ENCODE measurements at regions of chr20 and their contacts with region 1.

Region 1: GRCh38 chr20:32652739-32653526 is 20.8 kb downstream of the C20orf203 start:
- DNase-seq: peak; percentile 14
- H3K4me3 ChIP-seq: no peak overlapping the region
- CTCF ChIP-seq: peak; percentile 95

Region 2: GRCh38 chr20:32497589-32498224 is 155.2 kb before region 1 on chr20:
- CTCF ChIA-PET with region 1: interaction called, 10 read pairs
- POLR2A ChIA-PET with region 1: no interaction called
- DNase-seq: no peak
- H3K4me3 ChIP-seq: no peak overlapping the region
- CTCF ChIP-seq: no peak

Region 3: GRCh38 chr20:32610472-32611218 is 42.3 kb before region 1 on chr20:
- CTCF ChIA-PET with region 1: interaction called, 10 read pairs
- POLR2A ChIA-PET with region 1: no interaction called
- DNase-seq: no peak
- H3K4me3 ChIP-seq: no peak overlapping the region
- CTCF ChIP-seq: no peak

Region 4: DNA sequence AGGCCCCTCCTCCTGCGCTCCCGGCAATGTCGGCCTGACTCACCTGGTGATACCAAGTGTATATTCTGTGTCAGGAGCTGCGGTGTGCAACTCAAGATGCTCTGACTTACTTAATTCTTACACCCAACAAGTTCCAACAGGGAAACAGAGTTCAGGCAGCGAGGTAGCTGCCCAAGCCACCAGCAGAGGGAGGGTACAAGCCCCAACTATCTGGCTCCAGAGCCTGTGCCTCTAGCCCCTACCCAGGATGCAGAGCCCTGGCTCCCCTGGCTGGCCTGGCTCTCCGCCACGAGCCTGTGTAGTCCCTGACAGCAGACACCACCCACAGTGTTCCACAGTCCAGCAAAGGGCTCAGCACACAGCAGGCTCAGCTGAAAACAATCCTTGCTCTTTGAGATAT is 14.1 kb before region 1 on chr20:
- CTCF ChIA-PET with region 1: interaction called, 26 read pairs
- POLR2A ChIA-PET with region 1: no interaction called
- DNase-seq: no peak
- H3K4me3 ChIP-seq: no peak overlapping the region
- CTCF ChIP-seq: no peak

Measured in AG04449 (cell line).